ENCODE measurements at regions of chr19 and their contacts with region 1.

Region 1: GRCh38 chr19:44845612-44846454 is at the start of gene NECTIN2:
- DNase-seq: peak; percentile 97 to 100
- H3K4me3 ChIP-seq: peak within 1 kb of the TSS; percentile 84 to 98 (median 92)
- H3K27ac ChIP-seq: peak within 1 kb of the TSS; percentile 92
- H3K4me1 ChIP-seq: peaks cover 14 to 22% (median 16%) of the 10 kb centered on the region in 4 experiments
- H3K27me3 ChIP-seq: peaks cover 0 to 2% (median 0%) of the 10 kb centered on the region in 4 experiments; a peak in 1 of 7 replicates
- CTCF ChIP-seq: peak; percentile 70 to 97 (median 73)
- EP300 ChIP-seq: 0 out of 3 replicates have a peak, but pooled peaks of 1 of the 2 experiments have one; percentile 32
- POLR2A ChIP-seq: peak; percentile 48 to 87
- RAD21 ChIP-seq: peak; percentile 50 to 60
- total RNA-seq, gene NECTIN2: 181 and 184 TPM in 2 replicates

Region 2: GRCh38 chr19:44782729-44783128 is 63.1 kb before region 1 on chr19:
- CTCF ChIA-PET with region 1: interaction called, 24 read pairs
- POLR2A ChIA-PET with region 1: interaction called, 4 read pairs
- DNase-seq: no peak
- H3K4me3 ChIP-seq: no peak overlapping the region
- H3K27ac ChIP-seq: no peak overlapping the region
- H3K4me1 ChIP-seq: no peaks in the 10 kb centered on the region
- H3K27me3 ChIP-seq: no peaks in the 10 kb centered on the region
- CTCF ChIP-seq: no peak
- EP300 ChIP-seq: no peak
- POLR2A ChIP-seq: no peak
- RAD21 ChIP-seq: 0 out of 4 replicates have a peak, but pooled peaks of 1 of the 2 experiments have one; percentile 5

Region 3: GRCh38 chr19:44820648-44821609 is 24.9 kb before region 1 on chr19:
- CTCF ChIA-PET with region 1: interaction called, 10 read pairs
- POLR2A ChIA-PET with region 1: interaction called, 12 read pairs
- DNase-seq: no peak
- H3K4me3 ChIP-seq: no peak overlapping the region
- H3K27ac ChIP-seq: no peak overlapping the region
- H3K4me1 ChIP-seq: 0 out of 7 replicates have a peak, but pooled peaks cover 0 to 3% (median 0%) of the 10 kb centered on the region in 4 experiments
- H3K27me3 ChIP-seq: peaks cover 0 to 10% (median 5%) of the 10 kb centered on the region in 4 experiments; a peak in 4 of 7 replicates
- CTCF ChIP-seq: no peak
- EP300 ChIP-seq: no peak
- POLR2A ChIP-seq: no peak
- RAD21 ChIP-seq: no peak

Region 4: DNA sequence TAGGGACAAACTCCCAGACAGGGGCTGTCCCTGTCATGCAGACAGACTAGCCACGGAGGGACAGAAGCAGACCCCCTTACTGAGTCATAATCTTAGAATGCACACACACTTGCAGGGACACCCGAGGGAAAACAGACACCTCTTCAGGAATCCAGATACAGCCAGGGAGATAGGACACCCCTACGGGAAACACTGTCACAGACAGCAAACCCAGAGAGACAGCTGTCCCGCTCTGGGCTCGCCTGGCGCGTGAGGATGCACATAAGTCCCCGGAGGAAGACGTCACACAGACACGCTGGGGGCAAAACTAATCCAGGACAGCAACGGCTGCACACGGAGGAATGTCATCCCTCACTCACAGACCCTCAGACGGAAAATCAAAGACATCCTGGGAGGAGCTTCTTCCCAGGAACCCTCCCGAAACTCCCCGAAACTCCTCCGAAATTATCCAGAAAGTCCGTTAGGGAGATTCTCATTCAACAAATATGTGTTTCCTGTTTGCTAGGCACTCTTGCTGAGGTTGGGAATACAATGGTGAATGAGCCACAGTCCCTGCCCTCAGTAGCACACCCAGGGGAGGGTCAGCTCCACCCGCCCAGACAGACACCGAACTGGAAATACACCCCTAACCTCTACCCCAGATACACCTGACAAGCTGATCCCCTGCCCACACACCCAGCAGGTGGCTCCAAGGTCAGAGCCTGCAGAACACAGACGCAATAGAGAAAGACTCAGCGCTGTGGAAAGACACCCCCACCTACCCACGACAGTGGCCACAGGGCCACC is 30.0 kb after region 1 on chr19:
- CTCF ChIA-PET with region 1: interaction called, 4 read pairs
- POLR2A ChIA-PET with region 1: interaction called, 65 read pairs
- DNase-seq: no peak
- H3K4me3 ChIP-seq: no peak overlapping the region
- H3K27ac ChIP-seq: no peak overlapping the region
- H3K4me1 ChIP-seq: peaks cover 0 to 20% (median 3%) of the 10 kb centered on the region in 4 experiments; a peak in 5 of 7 replicates
- H3K27me3 ChIP-seq: no peaks in the 10 kb centered on the region
- CTCF ChIP-seq: no peak
- EP300 ChIP-seq: no peak
- POLR2A ChIP-seq: no peak
- RAD21 ChIP-seq: no peak

Region 5: GRCh38 chr19:44903602-44904425 is 58.0 kb after region 1 on chr19:
- CTCF ChIA-PET with region 1: interaction called, 8 read pairs
- POLR2A ChIA-PET with region 1: interaction called, 31 read pairs
- DNase-seq: peak; percentile 58 to 98
- H3K4me3 ChIP-seq: no peak overlapping the region
- H3K27ac ChIP-seq: no peak overlapping the region
- H3K4me1 ChIP-seq: peaks cover 0 to 8% (median 7%) of the 10 kb centered on the region in 4 experiments; a peak in 6 of 7 replicates
- H3K27me3 ChIP-seq: no peaks in the 10 kb centered on the region
- CTCF ChIP-seq: peak; percentile 94 to 95 (median 94)
- EP300 ChIP-seq: no peak
- POLR2A ChIP-seq: peak in 1 of 2 experiments; percentile 79; a peak in 2 of 3 replicates
- RAD21 ChIP-seq: peak; percentile 83 to 88

Measured in H1 (cell line).